Activated CD4-positive, alpha-beta T cell treated with anti-CD3 and anti-CD28 coated beads for 36 hours (primary cell): ENCODE measurements at regions of chr19 and their contacts with region 1.

Region 1: DNA sequence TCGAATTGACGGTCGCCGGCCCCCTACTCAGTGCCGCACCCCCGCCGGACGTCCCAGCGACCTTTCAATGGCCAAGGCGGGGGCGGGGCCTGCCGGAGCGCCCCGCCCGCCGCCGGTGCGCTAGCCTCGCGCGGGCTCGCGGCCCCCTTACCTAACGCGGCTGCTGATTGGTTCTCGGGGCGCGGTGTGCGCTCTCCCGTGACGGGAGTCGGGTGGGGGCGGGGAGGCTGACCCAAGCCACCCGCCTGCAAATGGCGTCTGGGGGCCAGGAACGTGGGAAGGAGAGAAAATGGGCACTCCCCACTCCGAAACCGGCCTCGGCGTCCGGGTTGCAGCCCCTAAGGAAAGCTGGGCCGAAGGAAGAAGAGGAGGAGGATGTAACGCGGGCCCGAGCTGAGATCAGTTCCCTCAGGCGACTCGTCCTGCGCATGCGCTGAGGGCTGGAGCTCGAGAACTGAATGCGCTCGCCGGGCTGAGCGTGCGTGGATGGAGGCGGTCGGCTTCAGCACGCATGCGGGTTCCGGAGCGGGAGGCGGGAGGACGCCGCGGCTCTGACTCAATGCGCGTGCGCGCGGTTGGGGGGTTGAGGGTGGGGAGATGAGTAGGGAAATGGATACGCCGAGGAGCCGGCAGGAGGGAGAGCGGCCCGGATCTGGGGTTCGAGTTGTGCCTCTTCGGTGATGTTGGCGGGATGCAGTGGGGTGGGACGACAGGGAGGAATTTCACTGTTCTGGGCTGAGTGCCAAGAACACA is at the start of gene SMG9:
- DNase-seq: peak; percentile 99
- ATAC-seq: peak; percentile 75
- H3K4me3 Mint-ChIP-seq: peak within 1 kb of the TSS; percentile 99
- H3K27ac Mint-ChIP-seq: peak within 1 kb of the TSS; percentile 99
- H3K4me1 Mint-ChIP-seq: peaks cover 69% of the 10 kb centered on the region
- H3K27me3 Mint-ChIP-seq: no peaks in the 10 kb centered on the region
- total RNA-seq, gene SMG9: 64.4 to 65.2 TPM

Region 2: DNA sequence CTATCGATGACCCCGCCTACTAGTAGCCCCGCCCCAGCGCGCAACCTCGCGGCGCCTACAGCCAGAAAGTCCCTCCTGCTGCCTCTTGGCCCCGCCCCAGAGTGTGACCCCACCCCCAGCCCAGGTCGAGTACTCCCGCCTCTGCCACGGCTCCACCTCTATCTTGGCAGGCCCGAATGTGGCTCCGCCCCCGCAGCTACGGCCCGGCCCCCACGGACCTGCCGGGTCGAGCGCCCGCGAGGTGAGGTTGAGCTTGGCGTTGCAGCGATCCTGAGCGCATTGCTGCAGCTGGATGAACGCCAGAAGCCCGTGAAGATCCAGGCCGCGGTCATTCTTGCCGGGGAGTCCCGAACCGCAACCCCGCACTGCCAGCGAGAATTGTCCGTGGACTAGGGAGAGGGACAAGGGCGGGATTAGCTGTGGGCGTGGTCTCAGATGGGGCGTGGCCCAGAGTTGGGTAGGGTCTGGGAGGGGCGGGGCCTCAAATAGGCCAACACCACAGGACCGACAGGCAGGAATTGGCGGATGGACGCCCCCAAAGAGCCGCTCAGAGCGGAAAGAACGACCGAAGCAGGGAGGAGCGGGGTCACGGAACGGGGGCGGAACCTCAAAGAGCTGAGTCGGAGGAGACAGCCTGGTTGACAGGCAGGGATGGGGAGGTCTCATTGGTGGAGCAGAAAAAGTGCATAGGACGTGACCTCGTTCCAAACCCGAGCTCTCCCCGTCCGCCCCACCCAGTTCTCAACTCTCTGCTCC is 291.1 kb before region 1 on chr19:
- CTCF ChIA-PET with region 1: no interaction called
- POLR2A ChIA-PET with region 1: no interaction called
- intact Hi-C with region 1: loop called in 1 of 2 experiments (anchors 1 kb)
- DNase-seq: peak; percentile 100
- ATAC-seq: peak; percentile 90
- H3K4me3 Mint-ChIP-seq: peak overlapping the region; percentile 87
- H3K27ac Mint-ChIP-seq: peak overlapping the region; percentile 93
- H3K4me1 Mint-ChIP-seq: peaks cover 48% of the 10 kb centered on the region
- H3K27me3 Mint-ChIP-seq: no peaks in the 10 kb centered on the region

Region 3: DNA sequence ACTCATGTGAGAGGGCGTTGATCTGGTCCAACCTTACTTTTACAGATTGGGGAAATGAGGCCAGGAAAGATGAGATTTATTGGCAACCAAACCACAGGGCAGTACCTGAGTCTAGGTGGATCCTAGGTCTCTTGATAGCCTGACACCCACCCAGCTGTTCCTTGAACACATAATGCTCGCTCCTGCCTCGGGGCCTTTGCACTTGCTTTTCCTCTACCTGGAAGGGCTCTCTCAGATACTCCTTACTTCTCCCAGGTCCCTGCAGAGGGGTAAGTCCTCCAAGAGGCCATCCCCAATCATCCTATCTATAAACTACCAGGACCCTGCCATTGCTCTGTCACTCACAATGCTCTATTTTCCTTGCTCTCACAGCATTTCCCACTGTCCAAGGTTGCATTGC is 214.3 kb before region 1 on chr19:
- CTCF ChIA-PET with region 1: no interaction called
- POLR2A ChIA-PET with region 1: no interaction called
- intact Hi-C with region 1: no loop called
- DNase-seq: no peak
- ATAC-seq: no peak
- H3K4me3 Mint-ChIP-seq: no peak overlapping the region
- H3K27ac Mint-ChIP-seq: no peak overlapping the region
- H3K4me1 Mint-ChIP-seq: peaks cover under 1% of the 10 kb centered on the region
- H3K27me3 Mint-ChIP-seq: no peaks in the 10 kb centered on the region

Region 4: DNA sequence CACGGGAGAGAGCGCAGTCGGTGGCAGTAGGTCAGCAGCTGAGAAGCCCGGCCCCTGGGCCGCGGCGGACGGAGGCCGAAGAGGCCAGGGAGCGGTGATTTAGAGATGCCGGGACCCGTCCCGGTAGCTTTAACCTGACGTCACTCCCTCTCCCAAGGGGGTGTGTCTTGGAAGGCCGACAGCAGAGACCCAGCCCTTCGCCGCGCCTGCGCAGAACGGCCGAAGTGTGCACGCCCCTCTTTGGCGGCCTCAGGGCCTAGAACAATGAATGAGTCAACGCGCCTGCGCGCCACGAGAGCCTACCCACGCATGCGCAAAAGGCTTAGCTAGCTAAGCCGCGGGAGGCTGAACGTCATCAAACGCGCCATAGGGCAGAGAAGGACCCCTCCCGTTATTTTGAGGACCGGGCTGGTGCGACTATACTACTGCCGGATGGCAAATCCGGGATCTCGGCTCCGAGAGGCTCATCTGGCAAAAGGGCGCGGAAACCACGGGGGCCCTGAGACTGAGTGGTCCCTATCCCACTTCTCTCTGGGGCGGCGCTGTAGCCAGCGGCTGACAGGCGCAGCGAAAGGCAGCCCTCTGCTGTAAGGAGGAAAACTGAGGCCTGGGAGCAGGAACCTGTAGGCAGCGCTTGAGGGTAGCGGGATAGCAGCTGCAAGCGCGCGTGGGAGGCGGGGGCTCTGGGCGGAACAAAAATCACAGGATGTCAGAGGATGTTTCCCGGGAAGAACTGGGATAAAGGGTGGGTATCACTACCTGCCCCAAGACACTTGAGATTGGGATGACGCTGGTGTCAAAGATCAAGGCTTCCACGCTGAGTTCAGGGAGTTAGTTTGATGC is 158.5 kb before region 1 on chr19 and contains the starts of genes IRGQ and ZNF576:
- CTCF ChIA-PET with region 1: interaction called, 3 read pairs
- POLR2A ChIA-PET with region 1: interaction called, 7 read pairs
- intact Hi-C with region 1: loop called in 1 of 2 experiments (anchors 1 kb)
- DNase-seq: peak; percentile 100
- ATAC-seq: peak; percentile 83
- H3K4me3 Mint-ChIP-seq: peak within 1 kb of the TSS; percentile 87
- H3K27ac Mint-ChIP-seq: peak within 1 kb of the TSS; percentile 95
- H3K4me1 Mint-ChIP-seq: peaks cover 26% of the 10 kb centered on the region
- H3K27me3 Mint-ChIP-seq: no peaks in the 10 kb centered on the region
- total RNA-seq, gene IRGQ: 11.1 to 16.4 TPM
- total RNA-seq, gene ZNF576: 11.6 to 14.3 TPM

Region 5: GRCh38 chr19:43743022-43743421 is 11.7 kb before region 1 on chr19:
- CTCF ChIA-PET with region 1: interaction called, 10 read pairs
- POLR2A ChIA-PET with region 1: no interaction called
- intact Hi-C with region 1: no loop called
- DNase-seq: no peak
- ATAC-seq: no peak
- H3K4me3 Mint-ChIP-seq: no peak overlapping the region
- H3K27ac Mint-ChIP-seq: no peak overlapping the region
- H3K4me1 Mint-ChIP-seq: peaks cover 9% of the 10 kb centered on the region
- H3K27me3 Mint-ChIP-seq: no peaks in the 10 kb centered on the region

Region 6: GRCh38 chr19:43809762-43810696 is 55.4 kb after region 1 on chr19:
- CTCF ChIA-PET with region 1: interaction called, 10 read pairs
- POLR2A ChIA-PET with region 1: no interaction called
- intact Hi-C with region 1: no loop called
- DNase-seq: no peak
- ATAC-seq: peak; percentile 83
- H3K4me3 Mint-ChIP-seq: no peak overlapping the region
- H3K27ac Mint-ChIP-seq: no peak overlapping the region
- H3K4me1 Mint-ChIP-seq: no peaks in the 10 kb centered on the region
- H3K27me3 Mint-ChIP-seq: peaks cover 8% of the 10 kb centered on the region

Region 7: DNA sequence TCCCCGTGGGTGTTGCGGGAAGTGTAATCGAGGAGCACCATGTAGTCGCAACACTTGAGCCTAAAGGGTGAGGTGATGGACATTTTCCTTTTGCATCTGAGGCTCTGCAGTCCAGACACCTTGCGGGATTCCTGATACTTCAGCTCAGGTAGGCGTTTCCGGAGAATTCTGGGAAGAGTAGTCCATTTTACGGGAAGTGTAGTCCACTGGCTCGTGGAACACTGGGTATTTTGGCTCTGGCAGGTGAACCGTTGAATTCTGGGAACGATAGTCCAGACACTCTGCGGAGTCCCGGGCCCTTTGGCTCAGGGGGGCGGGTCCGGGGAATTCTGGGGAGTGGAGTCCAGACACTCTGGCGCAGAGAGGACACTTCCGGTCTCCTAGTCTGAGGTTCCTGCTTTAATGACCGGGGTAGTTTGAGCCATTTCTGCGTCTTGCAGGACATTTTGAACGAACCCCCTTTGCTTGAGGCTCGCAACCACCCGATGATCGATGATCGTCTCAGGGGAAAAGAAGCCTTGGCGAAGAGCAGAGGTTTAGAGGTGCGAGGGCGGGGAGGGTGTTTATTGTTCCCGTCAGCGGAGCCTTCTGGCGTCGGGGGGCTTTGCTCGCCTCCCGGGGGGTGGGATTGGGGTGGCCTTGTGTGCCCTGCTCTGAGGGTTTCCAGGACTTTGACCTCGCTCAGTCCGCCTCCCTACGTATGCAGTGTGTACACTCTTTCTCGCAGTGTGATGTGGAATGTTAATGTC is 297.1 kb after region 1 on chr19 and contains the start of gene ZNF223:
- CTCF ChIA-PET with region 1: no interaction called
- POLR2A ChIA-PET with region 1: no interaction called
- intact Hi-C with region 1: no loop called
- DNase-seq: peak; percentile 63
- ATAC-seq: peak; percentile 78
- H3K4me3 Mint-ChIP-seq: peak within 1 kb of the TSS; percentile 76
- H3K27ac Mint-ChIP-seq: peak within 1 kb of the TSS; percentile 64
- H3K4me1 Mint-ChIP-seq: peaks cover 21% of the 10 kb centered on the region
- H3K27me3 Mint-ChIP-seq: peaks cover 3% of the 10 kb centered on the region
- total RNA-seq, gene ZNF223: 0.63 to 0.82 TPM